Naive thymus-derived CD4-positive, alpha-beta T cell (primary cell): ENCODE measurements at regions of chr19 and their contacts with region 1.

Region 1: DNA sequence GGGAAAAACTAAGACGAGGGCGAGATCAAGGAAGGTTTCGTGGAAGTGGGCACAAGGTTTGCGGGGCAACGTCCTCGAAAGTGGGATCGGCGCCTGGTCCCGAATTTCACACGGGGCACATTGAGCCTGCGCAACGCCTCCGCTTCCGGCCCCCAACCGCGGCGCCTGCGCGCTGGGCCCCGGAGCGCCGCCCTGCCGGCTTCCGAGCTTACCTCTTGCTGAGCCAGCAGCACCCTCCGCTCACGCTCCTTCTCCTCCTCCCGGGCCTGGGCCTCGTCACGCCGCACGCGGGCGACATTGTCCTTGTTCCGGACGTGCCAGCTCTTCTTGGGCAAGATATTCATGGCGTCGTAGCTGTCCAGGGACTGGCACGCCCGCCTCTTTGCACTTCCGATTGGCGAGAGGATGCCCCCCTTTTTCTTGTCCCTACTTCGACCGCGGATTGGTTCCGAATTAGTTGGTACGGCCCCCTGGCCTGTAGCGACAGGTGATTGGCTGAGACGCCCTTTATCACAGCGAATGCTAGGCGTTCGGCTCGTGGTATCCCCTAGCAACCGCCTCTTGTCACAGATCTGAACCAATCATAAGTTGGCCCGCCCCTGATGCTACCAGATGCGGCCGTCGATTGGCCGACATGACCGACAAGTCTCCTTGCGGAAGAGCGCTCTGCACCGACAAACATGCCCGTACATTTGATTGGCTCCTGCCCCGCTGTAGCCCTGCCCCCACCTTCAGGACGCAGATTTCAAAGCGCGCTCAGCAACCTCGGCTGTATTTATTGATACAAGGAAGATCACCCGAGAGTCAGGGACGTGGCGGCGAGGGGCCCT is at the start of gene LENG1:
- DNase-seq: peak; percentile 80 to 100 (median 99)
- ATAC-seq: peak; percentile 91
- H3K4me3 ChIP-seq: peak within 1 kb of the TSS; percentile 78
- H3K4me3 Mint-ChIP-seq: peak within 1 kb of the TSS; percentile 91 to 100 (median 98)
- H3K27ac ChIP-seq: peak within 1 kb of the TSS; percentile 87
- H3K27ac Mint-ChIP-seq: peak within 1 kb of the TSS; percentile 95 to 100 (median 99)
- H3K4me1 ChIP-seq: peaks cover 35 to 53% of the 10 kb centered on the region in 2 donors
- H3K4me1 Mint-ChIP-seq: peaks cover 47 to 88% (median 65%) of the 10 kb centered on the region in 7 donors
- H3K27me3 ChIP-seq: no peaks in the 10 kb centered on the region
- H3K27me3 Mint-ChIP-seq: no peaks in the 10 kb centered on the region
- total RNA-seq, gene LENG1: 7.1 to 20.4 (median 11.8) TPM

Region 2: GRCh38 chr19:54102421-54103169 is 57.0 kb before region 1 on chr19 and contains the start of gene NDUFA3:
- CTCF ChIA-PET with region 1: no interaction called
- POLR2A ChIA-PET with region 1: interaction called, 6 read pairs
- intact Hi-C with region 1: loop called in 1 of 2 experiments (anchors 1 kb)
- DNase-seq: peak; percentile 95 to 99 (median 97)
- ATAC-seq: peak; percentile 99
- H3K4me3 ChIP-seq: peak within 1 kb of the TSS; percentile 72
- H3K4me3 Mint-ChIP-seq: peak within 1 kb of the TSS; percentile 87 to 99 (median 98)
- H3K27ac ChIP-seq: peak within 1 kb of the TSS; percentile 77
- H3K27ac Mint-ChIP-seq: peak within 1 kb of the TSS; percentile 85 to 98 (median 94)
- H3K4me1 ChIP-seq: peaks cover 0 to 6% of the 10 kb centered on the region in 2 donors
- H3K4me1 Mint-ChIP-seq: peaks cover 5 to 40% (median 24%) of the 10 kb centered on the region in 7 donors
- H3K27me3 ChIP-seq: no peaks in the 10 kb centered on the region
- H3K27me3 Mint-ChIP-seq: peaks cover 0 to 6% (median 0%) of the 10 kb centered on the region in 5 donors
- total RNA-seq, gene NDUFA3: 64.4 to 127 (median 117) TPM

Region 3: GRCh38 chr19:54137086-54137921 is 22.3 kb before region 1 on chr19 and contains the start of gene CNOT3:
- CTCF ChIA-PET with region 1: interaction called, 7 read pairs
- POLR2A ChIA-PET with region 1: interaction called, 173 read pairs
- intact Hi-C with region 1: loop called (anchors 1 kb)
- DNase-seq: peak; percentile 90 to 100 (median 100)
- ATAC-seq: peak; percentile 88
- H3K4me3 ChIP-seq: peak within 1 kb of the TSS; percentile 66
- H3K4me3 Mint-ChIP-seq: peak within 1 kb of the TSS; percentile 87 to 98 (median 90)
- H3K27ac ChIP-seq: peak within 1 kb of the TSS; percentile 97
- H3K27ac Mint-ChIP-seq: peak within 1 kb of the TSS; percentile 85 to 94 (median 92)
- H3K4me1 ChIP-seq: peaks cover 19 to 30% of the 10 kb centered on the region in 2 donors
- H3K4me1 Mint-ChIP-seq: peaks cover 33 to 60% (median 46%) of the 10 kb centered on the region in 7 donors
- H3K27me3 ChIP-seq: no peaks in the 10 kb centered on the region
- H3K27me3 Mint-ChIP-seq: no peaks in the 10 kb centered on the region
- total RNA-seq, gene CNOT3: 38.0 to 84.6 (median 63.9) TPM

Region 4: GRCh38 chr19:54203151-54203611 is 43.6 kb after region 1 on chr19:
- CTCF ChIA-PET with region 1: no interaction called
- POLR2A ChIA-PET with region 1: interaction called, 19 read pairs
- intact Hi-C with region 1: loop called (anchors 1 kb)
- DNase-seq: no peak
- ATAC-seq: no peak
- H3K4me3 ChIP-seq: no peak overlapping the region
- H3K4me3 Mint-ChIP-seq: peak overlapping the region in 9 of 10 donors; percentile 25 to 99 (median 98)
- H3K27ac ChIP-seq: peak overlapping the region; percentile 46
- H3K27ac Mint-ChIP-seq: peak overlapping the region in 3 of 9 donors; percentile 16 to 46 (median 38)
- H3K4me1 ChIP-seq: peaks cover 45 to 53% of the 10 kb centered on the region in 2 donors
- H3K4me1 Mint-ChIP-seq: peaks cover 30 to 86% (median 78%) of the 10 kb centered on the region in 7 donors
- H3K27me3 ChIP-seq: no peaks in the 10 kb centered on the region
- H3K27me3 Mint-ChIP-seq: peaks cover 0 to 4% (median 0%) of the 10 kb centered on the region in 5 donors

Region 5: DNA sequence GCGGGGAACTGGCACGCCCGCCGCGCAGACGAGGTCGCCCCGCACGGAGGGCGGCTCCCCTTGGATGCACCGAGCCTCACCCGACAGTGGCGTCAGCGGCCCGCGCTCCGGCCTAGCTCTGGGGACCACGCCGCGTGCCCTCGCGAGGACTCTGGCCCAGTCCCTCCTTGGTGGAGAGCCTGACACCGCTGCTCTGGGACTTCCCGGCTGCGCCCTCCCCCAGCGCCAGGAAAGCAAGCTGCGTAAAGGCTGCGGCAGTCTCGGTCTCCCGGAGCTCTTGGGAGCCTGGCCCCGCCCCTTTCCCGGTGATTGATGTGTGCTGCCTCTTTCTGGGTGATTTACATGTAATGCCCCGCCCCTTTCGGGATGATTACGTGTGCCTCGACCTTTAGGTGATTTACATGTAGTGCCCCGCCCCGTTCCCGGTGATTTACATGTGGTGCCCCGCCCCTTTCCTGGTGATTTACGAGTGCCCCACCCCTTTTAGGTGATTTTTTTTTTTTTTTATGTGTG is 304.0 kb after region 1 on chr19 and contains the start of gene LENG9:
- CTCF ChIA-PET with region 1: no interaction called
- POLR2A ChIA-PET with region 1: no interaction called
- intact Hi-C with region 1: loop called in 1 of 2 experiments (anchors 2 kb)
- DNase-seq: peak; percentile 73 to 97 (median 87)
- ATAC-seq: peak; percentile 81
- H3K4me3 ChIP-seq: peak within 1 kb of the TSS; percentile 88
- H3K4me3 Mint-ChIP-seq: peak within 1 kb of the TSS; percentile 84 to 95 (median 92)
- H3K27ac ChIP-seq: peak within 1 kb of the TSS; percentile 71
- H3K27ac Mint-ChIP-seq: peak within 1 kb of the TSS; percentile 86 to 98 (median 93)
- H3K4me1 ChIP-seq: peaks cover 17 to 23% of the 10 kb centered on the region in 2 donors
- H3K4me1 Mint-ChIP-seq: peaks cover 16 to 35% (median 33%) of the 10 kb centered on the region in 7 donors
- H3K27me3 ChIP-seq: peaks cover 0 to 3% of the 10 kb centered on the region in 2 donors
- H3K27me3 Mint-ChIP-seq: peaks cover 5 to 23% (median 7%) of the 10 kb centered on the region in 5 donors
- total RNA-seq, gene LENG9: 3.5 to 6.1 (median 4.3) TPM